ENCODE measurements at regions of chr14 and their contacts with region 1.

Region 1: GRCh38 chr14:60622917-60623257 is 26.4 kb downstream of the SIX1 start:
- DNase-seq: no peak
- ATAC-seq: no peak
- H3K4me3 ChIP-seq: no peak overlapping the region
- H3K4me3 Mint-ChIP-seq: no peak overlapping the region
- H3K27ac ChIP-seq: no peak overlapping the region
- H3K27ac Mint-ChIP-seq: no peak overlapping the region
- H3K4me1 ChIP-seq: no peaks in the 10 kb centered on the region
- H3K4me1 Mint-ChIP-seq: no peaks in the 10 kb centered on the region
- H3K27me3 ChIP-seq: peaks cover 9% of the 10 kb centered on the region in 2 experiments
- H3K27me3 Mint-ChIP-seq: peaks cover 24 to 30% of the 10 kb centered on the region in 2 donors

Region 2: GRCh38 chr14:61025251-61026223 is 402.6 kb after region 1 on chr14:
- CTCF ChIA-PET with region 1: interaction called, 19 read pairs
- POLR2A ChIA-PET with region 1: no interaction called
- DNase-seq: peak in 32 of 35 experiments; percentile 4 to 75 (median 32)
- ATAC-seq: no peak
- H3K4me3 ChIP-seq: no peak overlapping the region
- H3K4me3 Mint-ChIP-seq: no peak overlapping the region
- H3K27ac ChIP-seq: no peak overlapping the region
- H3K27ac Mint-ChIP-seq: no peak overlapping the region
- H3K4me1 ChIP-seq: no peaks in the 10 kb centered on the region
- H3K4me1 Mint-ChIP-seq: no peaks in the 10 kb centered on the region
- H3K27me3 ChIP-seq: no peaks in the 10 kb centered on the region
- H3K27me3 Mint-ChIP-seq: no peaks in the 10 kb centered on the region

Region 3: DNA sequence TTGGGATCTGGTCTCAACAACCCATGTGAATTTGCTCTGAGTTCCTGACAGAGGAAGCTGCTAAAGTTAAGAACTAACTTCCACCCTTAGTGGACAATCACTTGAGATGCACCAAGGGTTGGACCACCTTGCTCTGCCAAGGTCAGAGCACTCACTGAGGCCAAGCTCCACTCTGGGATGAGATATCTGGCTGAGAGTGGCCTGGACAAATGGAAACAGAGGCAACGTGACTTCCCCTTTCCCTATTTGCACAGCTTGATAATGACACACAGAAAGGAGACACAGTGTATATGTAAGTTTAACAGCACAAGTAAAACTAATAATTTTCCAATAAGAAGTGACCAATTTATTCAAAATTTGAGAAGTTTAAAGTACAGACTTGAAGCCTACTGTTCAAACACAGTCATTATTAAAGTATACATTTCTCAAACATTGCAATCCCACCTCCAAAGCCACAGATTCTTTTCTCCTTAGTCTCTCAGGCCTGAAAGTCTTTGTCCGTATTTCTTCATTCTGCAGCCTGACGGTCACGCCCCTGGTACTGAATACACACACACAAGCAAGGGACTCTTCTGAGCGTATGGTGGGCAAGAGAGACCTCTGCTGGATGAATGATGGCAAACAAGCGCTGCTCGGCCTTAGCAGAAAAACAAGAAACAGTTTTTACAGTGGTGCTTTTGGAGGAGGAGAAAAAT is 629.6 kb after region 1 on chr14:
- CTCF ChIA-PET with region 1: interaction called, 11 to 32 read pairs
- POLR2A ChIA-PET with region 1: no interaction called
- DNase-seq: peak; percentile 19 to 78 (median 49)
- ATAC-seq: peak; percentile 65 to 91 (median 85)
- H3K4me3 ChIP-seq: no peak overlapping the region
- H3K4me3 Mint-ChIP-seq: no peak overlapping the region
- H3K27ac ChIP-seq: no peak overlapping the region
- H3K27ac Mint-ChIP-seq: no peak overlapping the region
- H3K4me1 ChIP-seq: no peaks in the 10 kb centered on the region
- H3K4me1 Mint-ChIP-seq: peaks cover 0 to 6% (median 2%) of the 10 kb centered on the region in 3 donors
- H3K27me3 ChIP-seq: peaks cover 0 to 10% of the 10 kb centered on the region in 2 experiments
- H3K27me3 Mint-ChIP-seq: peaks cover 11 to 24% of the 10 kb centered on the region in 2 donors

Measured in T-cell (primary cell).